HCT116 (cell line): ENCODE measurements at regions of chr7 and their contacts with region 1.

Region 1: GRCh38 chr7:148485618-148486017 is 104.9 kb upstream of the C7orf33 start:
- DNase-seq: no peak
- ATAC-seq: no peak
- H3K4me3 ChIP-seq: no peak overlapping the region
- H3K27ac ChIP-seq: no peak overlapping the region
- H3K4me1 ChIP-seq: no peaks in the 10 kb centered on the region
- H3K27me3 ChIP-seq: peaks cover 4% of the 10 kb centered on the region; the same call in 1 of the 2 replicates
- CTCF ChIP-seq: 0 out of 6 replicates have a peak, but pooled peaks of 2 of the 3 experiments have one; percentile 8 to 17
- POLR2A ChIP-seq: no peak
- RAD21 ChIP-seq: peak; percentile 45

Region 2: GRCh38 chr7:148255333-148255732 is 230.3 kb before region 1 on chr7:
- CTCF ChIA-PET with region 1: no interaction called
- POLR2A ChIA-PET with region 1: no interaction called
- RAD21 ChIA-PET with region 1: no interaction called
- intact Hi-C with region 1: loop called (anchors 5 kb)
- DNase-seq: no peak
- ATAC-seq: no peak
- H3K4me3 ChIP-seq: no peak overlapping the region
- H3K27ac ChIP-seq: no peak overlapping the region
- H3K4me1 ChIP-seq: no peaks in the 10 kb centered on the region
- H3K27me3 ChIP-seq: no peaks in the 10 kb centered on the region
- CTCF ChIP-seq: peak in 1 of 3 experiments; percentile 41; a peak in 2 of 6 replicates
- POLR2A ChIP-seq: no peak
- RAD21 ChIP-seq: peak; percentile 27; the same call in 1 of the 2 replicates